ENCODE measurements at regions of chr7 and their contacts with region 1.

Region 1: DNA sequence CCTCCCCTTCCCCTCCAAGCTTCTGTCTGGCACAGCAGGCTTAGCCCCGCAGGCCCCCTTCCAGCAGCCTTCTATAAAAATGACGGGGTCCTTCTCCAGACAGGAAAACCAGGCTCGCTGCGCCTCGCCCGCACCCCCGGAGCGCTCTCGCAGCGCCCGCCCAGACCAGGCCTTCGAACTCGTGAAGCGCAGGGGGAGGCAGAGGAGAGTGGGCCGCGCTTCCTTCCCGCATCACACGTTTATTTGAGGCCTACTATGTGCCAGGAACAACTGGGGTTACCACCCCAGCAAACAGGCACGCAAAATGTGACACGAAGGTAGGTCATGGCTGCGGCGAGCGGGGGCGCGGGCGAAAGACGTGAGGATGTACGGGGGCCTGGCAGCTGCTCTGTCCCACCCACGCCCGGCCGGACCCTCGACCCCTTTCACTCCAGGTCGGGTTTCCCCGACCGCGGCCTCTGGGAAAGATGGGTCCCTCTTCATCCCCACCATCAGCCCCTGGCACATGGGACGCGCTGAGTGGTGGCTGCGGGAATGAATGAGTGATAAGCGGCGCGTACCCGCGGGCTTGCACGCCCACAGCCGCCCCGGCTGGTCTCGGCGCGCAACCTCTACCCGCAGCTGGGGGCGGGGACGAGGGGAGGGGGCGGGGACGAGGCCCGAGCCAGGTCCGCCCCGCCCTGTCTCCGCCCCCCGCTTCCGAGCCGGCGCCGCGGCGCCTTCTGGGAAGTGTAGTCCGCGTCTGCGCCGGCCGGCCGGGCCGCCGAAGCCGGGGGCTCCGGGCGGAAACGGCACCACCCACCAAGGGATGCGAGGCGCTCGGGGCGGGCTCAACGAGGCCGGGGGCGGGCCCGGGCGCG is 59.1 kb downstream of the ZNF467 start:
- DNase-seq: peak; percentile 94 to 97
- ATAC-seq: peak; percentile 96
- H3K4me3 ChIP-seq: peak overlapping the region; percentile 53 to 59
- H3K27ac ChIP-seq: no peak overlapping the region
- H3K4me1 ChIP-seq: no peaks in the 10 kb centered on the region
- H3K27me3 ChIP-seq: no peaks in the 10 kb centered on the region

Region 2: GRCh38 chr7:149624419-149625339 is 89.6 kb before region 1 on chr7:
- intact Hi-C with region 1: loop called (anchors 1 to 10 kb)
- DNase-seq: peak; percentile 97 to 98
- ATAC-seq: peak; percentile 97
- H3K4me3 ChIP-seq: peak overlapping the region; percentile 72 to 94
- H3K27ac ChIP-seq: peak overlapping the region; percentile 28 to 49
- H3K4me1 ChIP-seq: no peaks in the 10 kb centered on the region
- H3K27me3 ChIP-seq: no peaks in the 10 kb centered on the region

Region 3: DNA sequence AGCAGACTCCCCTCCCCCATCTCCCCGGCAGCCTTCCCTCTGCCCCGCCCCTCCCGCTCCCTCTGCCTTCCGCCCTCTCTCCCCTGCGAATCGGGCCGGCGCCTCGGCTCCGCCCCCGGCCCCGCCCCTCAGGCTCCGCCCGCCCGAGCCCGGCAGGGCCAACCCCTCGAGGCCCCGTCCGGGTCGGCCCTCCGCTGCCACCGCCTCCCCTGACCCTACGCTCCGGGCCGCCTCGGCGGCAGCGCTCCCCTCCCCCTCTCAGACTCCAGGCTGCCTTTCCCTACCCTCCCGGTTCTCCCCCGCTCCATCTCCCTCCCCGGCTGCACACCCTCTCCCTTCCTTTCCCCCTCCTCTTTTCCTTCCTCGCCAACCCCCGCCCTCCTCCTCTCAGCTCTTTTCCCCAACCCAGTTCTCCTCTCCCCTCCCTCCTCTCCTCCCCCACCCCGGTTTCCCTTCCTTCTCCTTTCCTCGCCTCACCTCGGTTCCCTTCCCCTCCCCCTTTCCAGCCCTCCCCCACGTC is 57.5 kb after region 1 on chr7:
- intact Hi-C with region 1: loop called in 1 of 2 experiments (anchors 5 kb)
- DNase-seq: peak; percentile 95 to 96
- ATAC-seq: peak; percentile 95
- H3K4me3 ChIP-seq: peak overlapping the region; percentile 56 to 71
- H3K27ac ChIP-seq: no peak overlapping the region
- H3K4me1 ChIP-seq: no peaks in the 10 kb centered on the region
- H3K27me3 ChIP-seq: no peaks in the 10 kb centered on the region

Region 4: GRCh38 chr7:149790146-149790548 is 75.9 kb after region 1 on chr7:
- intact Hi-C with region 1: no loop called
- DNase-seq: peak; percentile 65 to 80
- ATAC-seq: no peak
- H3K4me3 ChIP-seq: no peak overlapping the region
- H3K27ac ChIP-seq: no peak overlapping the region
- H3K4me1 ChIP-seq: no peaks in the 10 kb centered on the region
- H3K27me3 ChIP-seq: no peaks in the 10 kb centered on the region

Measured in aorta (tissue), 5 donors.